ENCODE measurements at regions of chr1 and their contacts with region 1.

Region 1: GRCh38 chr1:228120857-228121489 is 11.9 kb upstream of the MRPL55 start:
- DNase-seq: no peak
- H3K4me3 ChIP-seq: no peak overlapping the region
- CTCF ChIP-seq: no peak

Region 2: DNA sequence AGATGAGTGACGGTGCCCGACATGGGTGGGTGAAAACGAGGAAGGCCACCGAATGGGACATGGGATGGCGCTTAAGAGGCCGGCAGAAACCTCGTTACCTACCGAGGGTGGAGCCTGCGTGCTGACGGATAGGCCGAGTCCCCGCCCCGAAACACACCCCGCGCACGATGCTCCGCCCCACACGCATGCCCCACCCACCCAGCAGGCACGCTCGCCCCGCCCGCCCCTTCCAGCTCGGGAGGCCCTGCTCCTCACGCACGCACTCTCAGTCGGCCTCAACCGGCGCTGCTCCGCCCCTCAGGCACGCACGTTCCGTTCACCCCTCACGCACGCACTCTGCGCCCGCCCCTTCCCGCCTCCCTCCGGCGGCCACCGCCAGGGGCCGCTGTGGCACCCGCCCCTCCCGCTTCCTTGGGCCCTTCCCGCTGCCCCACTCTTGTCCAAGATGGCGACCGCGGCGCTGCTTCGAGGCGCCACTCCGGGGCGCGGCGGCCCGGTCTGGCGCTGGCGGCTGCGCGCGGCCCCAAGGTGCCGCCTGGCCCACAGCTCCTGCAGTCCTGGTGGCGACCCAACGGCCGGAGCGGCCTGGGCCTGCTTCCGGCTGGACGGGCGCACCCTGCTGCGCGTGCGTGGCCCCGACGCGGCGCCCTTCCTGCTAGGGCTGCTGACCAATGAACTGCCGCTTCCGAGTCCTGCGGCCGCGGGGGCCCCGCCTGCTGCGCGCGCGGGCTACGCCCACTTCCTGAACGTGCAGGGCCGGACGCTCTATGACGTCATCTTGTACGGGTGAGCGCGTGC is 44.6 kb after region 1 on chr1 and contains the start of gene IBA57:
- in situ Hi-C with region 1: no loop called
- DNase-seq: peak; percentile 95
- H3K4me3 ChIP-seq: peak within 1 kb of the TSS; percentile 72
- CTCF ChIP-seq: peak; percentile 79

Region 3: GRCh38 chr1:228180271-228180958 is 59.4 kb after region 1 on chr1:
- in situ Hi-C with region 1: loop called (anchors 10 kb)
- DNase-seq: no peak
- H3K4me3 ChIP-seq: no peak overlapping the region
- CTCF ChIP-seq: peak; percentile 28